ENCODE measurements at regions of chr14 and their contacts with region 1.

Region 1: DNA sequence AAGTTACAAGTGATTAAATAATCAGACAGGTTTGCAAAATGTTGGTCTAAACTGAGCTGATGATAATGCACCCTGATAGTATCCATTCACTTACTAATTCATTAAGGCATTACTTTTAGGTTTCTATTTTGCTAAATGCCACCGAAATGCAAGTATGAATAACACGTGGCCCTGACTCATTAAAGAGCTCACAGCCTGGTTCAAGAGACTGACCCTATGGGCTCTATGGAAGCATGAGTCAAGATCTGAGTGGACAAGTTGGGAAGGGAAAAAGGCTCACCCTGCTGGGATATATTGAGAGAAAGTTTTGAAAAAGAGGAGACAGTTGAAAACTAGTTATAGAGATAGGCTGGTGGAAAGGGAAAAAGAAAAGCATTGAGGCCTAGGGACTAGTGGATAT is 14.8 kb upstream of the LRRC9 start:
- DNase-seq: no peak
- H3K4me3 ChIP-seq: no peak overlapping the region
- H3K27ac ChIP-seq: no peak overlapping the region
- H3K4me1 ChIP-seq: no peaks in the 10 kb centered on the region
- H3K27me3 ChIP-seq: no peaks in the 10 kb centered on the region
- CTCF ChIP-seq: no peak

Region 2: GRCh38 chr14:59507063-59507780 is 398.0 kb before region 1 on chr14:
- intact Hi-C with region 1: loop called (anchors 10 kb)
- DNase-seq: peak; percentile 42 to 76
- H3K4me3 ChIP-seq: no peak overlapping the region
- H3K27ac ChIP-seq: no peak overlapping the region
- H3K4me1 ChIP-seq: no peaks in the 10 kb centered on the region
- H3K27me3 ChIP-seq: no peaks in the 10 kb centered on the region
- CTCF ChIP-seq: peak; percentile 78 to 89

Region 3: DNA sequence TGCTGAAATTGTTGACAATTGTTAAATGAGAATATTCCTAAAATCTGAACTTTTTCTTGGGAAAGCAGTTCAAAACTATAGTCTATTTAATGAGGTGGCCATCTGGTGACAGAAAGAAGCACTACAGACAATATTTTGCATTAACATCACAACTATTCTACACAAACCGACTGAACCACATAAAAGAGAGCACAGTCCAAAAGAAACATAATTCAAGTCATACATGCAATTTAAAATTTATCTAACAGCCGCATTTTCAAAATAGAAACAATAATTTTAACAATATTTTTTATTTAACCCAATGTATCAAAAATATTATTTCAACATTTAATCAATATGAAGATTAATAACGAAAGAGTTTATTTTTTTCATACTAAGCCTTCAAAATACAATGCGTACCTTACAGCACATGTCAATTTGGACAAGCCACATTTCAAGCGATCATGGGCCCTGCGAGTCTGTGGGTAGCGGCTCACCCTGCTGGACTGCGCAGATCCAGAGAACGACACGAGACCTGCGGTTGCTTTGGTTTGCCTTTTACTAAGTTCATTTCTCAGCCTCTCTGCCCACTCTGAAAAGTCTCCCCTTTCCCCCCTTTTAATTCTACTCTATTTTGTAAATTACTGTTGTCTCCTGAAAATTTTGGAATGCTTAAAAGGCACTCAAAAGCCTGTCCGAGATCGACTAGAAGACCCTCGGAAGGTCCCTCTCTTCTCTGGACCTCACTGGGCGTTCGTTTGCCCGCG is 13.8 kb after region 1 on chr14:
- intact Hi-C with region 1: no loop called
- DNase-seq: peak in 1 of 2 donors; percentile 66
- H3K4me3 ChIP-seq: peak overlapping the region; percentile 41 to 57
- H3K27ac ChIP-seq: no peak overlapping the region
- H3K4me1 ChIP-seq: peaks cover 0 to 13% (median 8%) of the 10 kb centered on the region in 4 donors
- H3K27me3 ChIP-seq: peaks cover 0 to 6% of the 10 kb centered on the region in 2 donors
- CTCF ChIP-seq: peak; percentile 43 to 65